K562 (cell line): ENCODE measurements at regions of chr7 and their contacts with region 1.

Region 1: GRCh38 chr7:143240291-143241168 is 18.7 kb downstream of the TAS2R40 start:
- DNase-seq: peak; percentile 78 to 87 (median 84)
- ATAC-seq: peak; percentile 97
- H3K4me3 ChIP-seq: no peak overlapping the region
- H3K27ac ChIP-seq: no peak overlapping the region
- H3K4me1 ChIP-seq: no peaks in the 10 kb centered on the region; a peak in 1 of 5 replicates
- H3K27me3 ChIP-seq: no peaks in the 10 kb centered on the region
- CTCF ChIP-seq: peak; percentile 95 to 98 (median 95)
- EP300 ChIP-seq: no peak
- POLR2A ChIP-seq: no peak
- RAD21 ChIP-seq: peak; percentile 98 to 99

Region 2: DNA sequence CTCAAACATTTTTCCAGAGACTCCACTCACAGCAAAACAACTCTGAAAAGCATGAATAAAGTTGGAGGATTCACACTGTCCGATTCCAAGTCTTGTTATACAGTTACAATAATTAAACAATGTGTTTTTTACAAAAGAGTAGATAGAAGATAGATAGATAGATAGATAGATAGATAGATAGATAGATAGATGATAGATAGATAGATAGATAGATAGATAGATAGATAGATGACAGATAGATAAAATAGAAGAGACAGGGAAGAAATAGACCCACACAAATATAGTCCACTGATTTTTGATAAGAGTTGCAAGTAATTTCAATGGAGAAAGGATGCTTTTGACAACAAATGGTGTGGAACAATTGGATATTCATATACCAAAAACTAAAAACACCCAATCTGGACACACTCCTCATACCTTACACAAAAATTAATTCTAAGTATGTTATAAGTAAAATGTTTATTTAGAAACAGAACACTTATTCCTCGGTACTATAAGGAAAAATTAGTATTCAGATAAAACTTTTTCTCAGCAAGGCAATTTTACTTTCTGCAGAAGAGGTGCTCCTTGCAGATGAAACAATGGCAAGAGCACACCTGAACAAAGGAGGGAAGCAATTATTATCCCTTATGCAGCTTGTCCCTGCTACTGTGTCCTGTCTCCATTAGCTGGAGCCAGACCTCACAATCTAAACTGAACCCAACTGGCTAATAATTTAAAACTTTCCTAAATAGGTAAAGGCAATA is 63.0 kb before region 1 on chr7:
- CTCF ChIA-PET with region 1: no interaction called
- POLR2A ChIA-PET with region 1: no interaction called
- in situ Hi-C with region 1: no loop called
- intact Hi-C with region 1: no loop called
- DNase-seq: no peak
- ATAC-seq: no peak
- H3K4me3 ChIP-seq: no peak overlapping the region
- H3K27ac ChIP-seq: no peak overlapping the region
- H3K4me1 ChIP-seq: no peaks in the 10 kb centered on the region
- H3K27me3 ChIP-seq: no peaks in the 10 kb centered on the region
- CTCF ChIP-seq: no peak
- EP300 ChIP-seq: no peak
- POLR2A ChIP-seq: no peak
- RAD21 ChIP-seq: no peak

Region 3: GRCh38 chr7:143256932-143257331 is 16.4 kb after region 1 on chr7:
- CTCF ChIA-PET with region 1: no interaction called
- POLR2A ChIA-PET with region 1: interaction called, 3 read pairs
- in situ Hi-C with region 1: no loop called
- intact Hi-C with region 1: loop called (anchors 1 kb)
- DNase-seq: peak; percentile 72 to 92 (median 82)
- ATAC-seq: peak; percentile 87
- H3K4me3 ChIP-seq: no peak overlapping the region
- H3K27ac ChIP-seq: peak overlapping the region; percentile 84
- H3K4me1 ChIP-seq: peaks cover 5 to 45% of the 10 kb centered on the region in 2 experiments; a peak in 4 of 5 replicates
- H3K27me3 ChIP-seq: no peaks in the 10 kb centered on the region
- CTCF ChIP-seq: no peak
- EP300 ChIP-seq: peak; percentile 68; the same call in 1 of the 2 replicates
- POLR2A ChIP-seq: no peak
- RAD21 ChIP-seq: no peak

Region 4: GRCh38 chr7:143305423-143306070 is 65.0 kb after region 1 on chr7:
- CTCF ChIA-PET with region 1: interaction called, 39 read pairs
- POLR2A ChIA-PET with region 1: interaction called, 7 read pairs
- in situ Hi-C with region 1: loop called (anchors 10 kb)
- intact Hi-C with region 1: loop called (anchors 1 kb)
- DNase-seq: peak; percentile 76 to 88 (median 78)
- ATAC-seq: peak; percentile 97
- H3K4me3 ChIP-seq: no peak overlapping the region
- H3K27ac ChIP-seq: no peak overlapping the region
- H3K4me1 ChIP-seq: no peaks in the 10 kb centered on the region
- H3K27me3 ChIP-seq: no peaks in the 10 kb centered on the region
- CTCF ChIP-seq: peak; percentile 96 to 98 (median 97)
- EP300 ChIP-seq: no peak
- POLR2A ChIP-seq: no peak; the same call in 1 of the 2 replicates
- RAD21 ChIP-seq: peak; percentile 73 to 84

Region 5: DNA sequence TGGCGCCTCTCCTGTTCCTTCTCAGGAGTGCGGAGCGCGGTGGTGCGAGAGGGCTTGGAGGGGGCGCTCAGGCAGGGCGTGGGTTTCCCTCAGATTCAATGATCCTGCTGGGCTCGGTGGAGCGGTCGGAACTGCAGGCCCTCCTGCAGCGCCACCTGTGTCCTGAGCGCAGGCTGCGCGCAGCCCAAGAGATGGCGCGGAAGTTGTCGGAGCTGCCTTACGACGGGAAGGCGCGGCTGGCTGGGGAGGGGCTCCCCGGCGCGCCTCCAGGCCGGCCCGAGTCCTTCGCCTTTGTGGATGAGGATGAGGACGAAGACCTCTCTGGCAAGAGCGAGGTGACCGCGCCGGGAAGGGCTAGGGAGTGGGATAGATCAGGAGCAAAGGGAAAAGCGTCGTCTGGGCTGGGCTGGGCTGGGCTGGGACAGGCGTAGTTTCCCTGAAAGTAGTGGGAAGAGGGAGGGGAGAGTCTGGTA is 104.9 kb after region 1 on chr7:
- CTCF ChIA-PET with region 1: no interaction called
- POLR2A ChIA-PET with region 1: no interaction called
- in situ Hi-C with region 1: no loop called
- intact Hi-C with region 1: loop called (anchors 1 kb)
- DNase-seq: peak; percentile 63 to 90 (median 76)
- ATAC-seq: peak; percentile 100
- H3K4me3 ChIP-seq: peak overlapping the region; percentile 1; the same call in 1 of the 2 replicates
- H3K27ac ChIP-seq: no peak overlapping the region
- H3K4me1 ChIP-seq: peaks cover 0 to 7% of the 10 kb centered on the region in 2 experiments; a peak in 2 of 5 replicates
- H3K27me3 ChIP-seq: peaks cover 33 to 53% of the 10 kb centered on the region in 2 experiments
- CTCF ChIP-seq: peak; percentile 81 to 96 (median 85)
- EP300 ChIP-seq: no peak
- POLR2A ChIP-seq: no peak
- RAD21 ChIP-seq: peak in 1 of 2 experiments; percentile 53; a peak in 2 of 4 replicates

Region 6: GRCh38 chr7:143372070-143372469 is 131.5 kb after region 1 on chr7:
- CTCF ChIA-PET with region 1: no interaction called
- POLR2A ChIA-PET with region 1: no interaction called
- in situ Hi-C with region 1: no loop called
- intact Hi-C with region 1: loop called (anchors 2 kb)
- DNase-seq: no peak
- ATAC-seq: 0 out of 3 replicates have a peak, but pooled peaks have one; percentile 12
- H3K4me3 ChIP-seq: no peak overlapping the region
- H3K27ac ChIP-seq: no peak overlapping the region
- H3K4me1 ChIP-seq: peaks cover 0 to 9% of the 10 kb centered on the region in 2 experiments; a peak in 1 of 5 replicates
- H3K27me3 ChIP-seq: peaks cover 19 to 33% of the 10 kb centered on the region in 2 experiments
- CTCF ChIP-seq: peak in 2 of 3 experiments; percentile 10 to 27; a peak in 1 of 6 replicates
- EP300 ChIP-seq: no peak
- POLR2A ChIP-seq: no peak
- RAD21 ChIP-seq: 0 out of 4 replicates have a peak, but pooled peaks of 1 of the 2 experiments have one; percentile 12

Region 7: DNA sequence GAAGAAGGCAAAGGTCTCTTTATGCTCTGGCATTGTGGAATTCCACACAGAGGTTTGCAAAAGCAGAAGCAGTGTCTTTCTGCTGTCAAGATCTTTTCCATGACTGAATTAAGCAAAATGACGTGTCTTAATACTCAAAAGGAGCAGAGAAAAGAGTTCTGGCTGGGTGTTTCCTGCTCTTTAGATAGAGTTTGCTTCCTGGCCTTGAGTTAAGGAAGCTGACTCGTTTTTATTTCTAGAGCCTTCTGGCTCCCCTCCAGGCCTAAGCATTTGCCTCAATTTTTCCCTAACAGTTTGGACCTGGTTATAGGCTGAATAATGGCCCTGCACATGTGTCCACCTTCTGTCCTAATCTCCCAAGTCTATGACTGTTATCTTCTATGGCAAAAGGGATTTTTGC is 258.7 kb after region 1 on chr7:
- CTCF ChIA-PET with region 1: no interaction called
- POLR2A ChIA-PET with region 1: no interaction called
- in situ Hi-C with region 1: no loop called
- intact Hi-C with region 1: loop called (anchors 5 kb)
- DNase-seq: no peak
- ATAC-seq: peak; percentile 11; the same call in 2 of the 3 replicates
- H3K4me3 ChIP-seq: no peak overlapping the region
- H3K27ac ChIP-seq: no peak overlapping the region
- H3K4me1 ChIP-seq: peaks cover 2 to 6% of the 10 kb centered on the region in 2 experiments
- H3K27me3 ChIP-seq: no peaks in the 10 kb centered on the region
- CTCF ChIP-seq: no peak
- EP300 ChIP-seq: no peak
- POLR2A ChIP-seq: no peak
- RAD21 ChIP-seq: no peak